ENCODE measurements at regions of chr22 and their contacts with region 1.

Region 1: GRCh38 chr22:45096256-45096907 is 67.3 kb upstream of the NUP50 start:
- DNase-seq: peak in 1 of 3 donors; percentile 62
- ATAC-seq: peak; percentile 67 to 71
- H3K4me3 ChIP-seq: no peak overlapping the region
- H3K27ac ChIP-seq: no peak overlapping the region
- H3K4me1 ChIP-seq: no peaks in the 10 kb centered on the region
- H3K27me3 ChIP-seq: no peaks in the 10 kb centered on the region

Region 2: GRCh38 chr22:44963832-44964721 is 132.3 kb before region 1 on chr22:
- intact Hi-C with region 1: no loop called
- DNase-seq: peak in 1 of 3 donors; percentile 54
- ATAC-seq: no peak
- H3K4me3 ChIP-seq: no peak overlapping the region
- H3K27ac ChIP-seq: no peak overlapping the region
- H3K4me1 ChIP-seq: no peaks in the 10 kb centered on the region
- H3K27me3 ChIP-seq: no peaks in the 10 kb centered on the region

Region 3: GRCh38 chr22:44975427-44976262 is 120.7 kb before region 1 on chr22:
- intact Hi-C with region 1: loop called in 2 of 4 experiments (anchors 2 to 10 kb)
- DNase-seq: peak; percentile 83 to 94 (median 93)
- ATAC-seq: peak; percentile 88
- H3K4me3 ChIP-seq: no peak overlapping the region
- H3K27ac ChIP-seq: no peak overlapping the region
- H3K4me1 ChIP-seq: no peaks in the 10 kb centered on the region
- H3K27me3 ChIP-seq: no peaks in the 10 kb centered on the region

Region 4: GRCh38 chr22:45208993-45209801 is 112.8 kb after region 1 on chr22:
- intact Hi-C with region 1: no loop called
- DNase-seq: peak in 2 of 3 donors; percentile 71 to 75
- ATAC-seq: peak in 1 of 2 donors; percentile 8
- H3K4me3 ChIP-seq: no peak overlapping the region
- H3K27ac ChIP-seq: no peak overlapping the region
- H3K4me1 ChIP-seq: peaks cover 5% of the 10 kb centered on the region
- H3K27me3 ChIP-seq: no peaks in the 10 kb centered on the region

Region 5: DNA sequence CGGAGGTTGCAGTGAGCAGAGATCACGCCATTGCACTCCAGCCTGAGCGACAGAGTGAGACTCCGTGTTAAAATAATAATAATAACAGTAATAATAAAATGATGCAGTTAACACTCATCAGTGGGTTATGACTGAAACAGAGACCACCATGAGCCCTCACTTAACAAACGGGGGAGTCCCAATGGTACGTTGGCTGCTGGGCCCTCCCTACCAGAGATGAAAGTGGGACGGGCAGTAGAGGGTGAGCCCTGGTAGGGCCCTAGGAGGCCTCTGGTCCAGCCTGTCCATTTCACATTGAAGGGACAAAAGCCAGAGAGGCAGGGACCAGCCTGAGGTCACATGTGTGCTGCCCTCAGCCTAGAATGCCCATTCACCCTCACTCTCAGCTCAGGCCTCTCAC is 158.0 kb after region 1 on chr22:
- intact Hi-C with region 1: no loop called
- DNase-seq: no peak
- ATAC-seq: no peak
- H3K4me3 ChIP-seq: no peak overlapping the region
- H3K27ac ChIP-seq: no peak overlapping the region
- H3K4me1 ChIP-seq: no peaks in the 10 kb centered on the region
- H3K27me3 ChIP-seq: no peaks in the 10 kb centered on the region

Region 6: GRCh38 chr22:45284705-45285262 is 188.4 kb after region 1 on chr22 and contains the start of gene UPK3A:
- intact Hi-C with region 1: no loop called
- DNase-seq: peak; percentile 72 to 90 (median 89)
- ATAC-seq: peak; percentile 90 to 92
- H3K4me3 ChIP-seq: peak within 1 kb of the TSS; percentile 9
- H3K27ac ChIP-seq: no peak within 1 kb of the TSS
- H3K4me1 ChIP-seq: no peaks in the 10 kb centered on the region
- H3K27me3 ChIP-seq: no peaks in the 10 kb centered on the region
- total RNA-seq, gene UPK3A: not detected

Measured in right cardiac atrium (tissue), 5 donors.